CD4-positive, alpha-beta memory T cell (primary cell): ENCODE measurements at regions of chr6 and their contacts with region 1.

Region 1: GRCh38 chr6:70107852-70108629 is 194.8 kb downstream of the COL9A1 start:
- DNase-seq: peak in 4 of 5 donors; percentile 23 to 34 (median 28)
- H3K4me3 ChIP-seq: no peak overlapping the region
- H3K4me3 Mint-ChIP-seq: no peak overlapping the region
- H3K27ac ChIP-seq: no peak overlapping the region
- H3K27ac Mint-ChIP-seq: no peak overlapping the region
- H3K4me1 ChIP-seq: no peaks in the 10 kb centered on the region
- H3K4me1 Mint-ChIP-seq: no peaks in the 10 kb centered on the region
- H3K27me3 ChIP-seq: no peaks in the 10 kb centered on the region
- H3K27me3 Mint-ChIP-seq: peaks cover 5 to 6% of the 10 kb centered on the region in 2 donors

Region 2: GRCh38 chr6:68634726-68635411 is 1473.2 kb before region 1 on chr6 and contains the start of gene ADGRB3:
- CTCF ChIA-PET with region 1: interaction called, 6 read pairs
- POLR2A ChIA-PET with region 1: no interaction called
- intact Hi-C with region 1: loop called (anchors 5 kb)
- DNase-seq: peak; percentile 13 to 41 (median 27)
- H3K4me3 ChIP-seq: peak within 1 kb of the TSS; percentile 24 to 31
- H3K4me3 Mint-ChIP-seq: peak within 1 kb of the TSS; percentile 81 to 92 (median 88)
- H3K27ac ChIP-seq: no peak within 1 kb of the TSS
- H3K27ac Mint-ChIP-seq: peak within 1 kb of the TSS in 3 of 7 donors; percentile 19 to 26 (median 25)
- H3K4me1 ChIP-seq: peaks cover 10% of the 10 kb centered on the region
- H3K4me1 Mint-ChIP-seq: peaks cover 8 to 26% (median 22%) of the 10 kb centered on the region in 4 donors
- H3K27me3 ChIP-seq: peaks cover 7% of the 10 kb centered on the region
- H3K27me3 Mint-ChIP-seq: peaks cover 32 to 34% of the 10 kb centered on the region in 2 donors
- total RNA-seq, gene ADGRB3: not detected

Region 3: DNA sequence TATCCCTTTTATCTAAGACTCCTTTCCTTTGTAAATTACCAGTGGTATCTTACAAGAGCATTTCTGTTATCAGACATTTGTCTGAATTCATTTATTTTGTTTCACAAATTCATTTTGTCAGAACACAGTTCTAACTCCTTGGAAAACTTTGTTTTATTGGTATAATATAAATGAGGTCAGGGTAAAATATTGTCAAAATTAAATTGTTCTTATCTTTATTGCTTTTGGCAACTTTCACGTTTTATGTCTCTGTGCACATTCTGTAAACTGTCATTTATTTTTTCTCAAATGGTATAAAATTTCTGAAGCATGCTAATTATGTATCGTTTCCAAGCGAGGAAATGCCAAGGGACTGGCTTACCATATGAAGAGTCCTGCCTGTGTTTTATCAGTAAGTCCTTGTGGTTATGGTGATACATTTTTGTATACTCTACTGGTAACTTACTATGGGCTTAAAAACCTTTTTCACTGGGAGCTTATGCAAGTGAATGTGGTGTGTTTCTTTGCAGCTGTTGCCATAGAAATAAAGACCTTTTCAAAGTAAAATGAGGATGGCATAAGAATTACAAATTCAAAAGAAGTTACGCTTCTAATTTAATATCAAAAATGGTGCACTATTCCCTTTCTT is 27.5 kb before region 1 on chr6:
- CTCF ChIA-PET with region 1: no interaction called
- POLR2A ChIA-PET with region 1: no interaction called
- intact Hi-C with region 1: no loop called
- DNase-seq: no peak
- H3K4me3 ChIP-seq: no peak overlapping the region
- H3K4me3 Mint-ChIP-seq: no peak overlapping the region
- H3K27ac ChIP-seq: no peak overlapping the region
- H3K27ac Mint-ChIP-seq: no peak overlapping the region
- H3K4me1 ChIP-seq: no peaks in the 10 kb centered on the region
- H3K4me1 Mint-ChIP-seq: no peaks in the 10 kb centered on the region
- H3K27me3 ChIP-seq: no peaks in the 10 kb centered on the region
- H3K27me3 Mint-ChIP-seq: peaks cover 0 to 2% of the 10 kb centered on the region in 2 donors